MCF 10A (cell line): ENCODE measurements at regions of chr9 and their contacts with region 1.

Region 1: GRCh38 chr9:74952281-74953151 is at the start of gene C9orf40:
- DNase-seq: peak; percentile 82
- H3K4me3 Mint-ChIP-seq: peak within 1 kb of the TSS; percentile 88
- H3K27ac Mint-ChIP-seq: peak within 1 kb of the TSS; percentile 92
- H3K4me1 Mint-ChIP-seq: peaks cover 9% of the 10 kb centered on the region
- H3K27me3 Mint-ChIP-seq: no peaks in the 10 kb centered on the region
- CTCF ChIP-seq: peak; percentile 69
- total RNA-seq, gene C9orf40: 5.6 and 5.8 TPM in 2 replicates

Region 2: GRCh38 chr9:74255489-74255984 is 697.0 kb before region 1 on chr9:
- CTCF ChIA-PET with region 1: interaction called, 11 read pairs
- POLR2A ChIA-PET with region 1: no interaction called
- intact Hi-C with region 1: no loop called
- DNase-seq: no peak
- H3K4me3 Mint-ChIP-seq: no peak overlapping the region
- H3K27ac Mint-ChIP-seq: no peak overlapping the region
- H3K4me1 Mint-ChIP-seq: no peaks in the 10 kb centered on the region
- H3K27me3 Mint-ChIP-seq: no peaks in the 10 kb centered on the region
- CTCF ChIP-seq: no peak

Region 3: GRCh38 chr9:74935008-74935407 is 17.5 kb before region 1 on chr9:
- CTCF ChIA-PET with region 1: interaction called, 16 read pairs
- POLR2A ChIA-PET with region 1: interaction called, 3 read pairs
- intact Hi-C with region 1: no loop called
- DNase-seq: no peak
- H3K4me3 Mint-ChIP-seq: no peak overlapping the region
- H3K27ac Mint-ChIP-seq: no peak overlapping the region
- H3K4me1 Mint-ChIP-seq: no peaks in the 10 kb centered on the region
- H3K27me3 Mint-ChIP-seq: no peaks in the 10 kb centered on the region
- CTCF ChIP-seq: no peak

Region 4: DNA sequence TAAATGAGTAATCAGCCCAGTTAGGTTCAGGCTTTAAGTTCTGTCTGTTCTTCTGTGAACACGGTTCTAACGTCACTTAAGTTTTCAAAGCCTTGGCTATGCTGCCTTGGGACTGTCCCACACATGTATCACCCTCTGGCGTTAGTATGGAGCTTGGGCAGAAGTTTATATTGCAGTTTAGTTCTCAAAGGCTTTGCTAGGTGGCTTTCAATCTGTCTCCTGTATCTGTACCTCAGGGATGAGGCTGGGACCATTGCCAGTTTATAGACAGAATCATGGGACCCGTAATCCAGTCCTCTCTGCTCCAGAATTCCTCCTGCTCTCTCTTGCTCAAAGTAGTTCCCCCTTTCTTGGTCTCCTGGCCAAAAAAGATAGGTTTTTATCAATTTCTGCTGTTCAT is 11.9 kb before region 1 on chr9:
- CTCF ChIA-PET with region 1: interaction called, 33 read pairs
- POLR2A ChIA-PET with region 1: no interaction called
- intact Hi-C with region 1: no loop called
- DNase-seq: peak; percentile 51
- H3K4me3 Mint-ChIP-seq: no peak overlapping the region
- H3K27ac Mint-ChIP-seq: no peak overlapping the region
- H3K4me1 Mint-ChIP-seq: peaks cover 7% of the 10 kb centered on the region
- H3K27me3 Mint-ChIP-seq: no peaks in the 10 kb centered on the region
- CTCF ChIP-seq: no peak

Region 5: DNA sequence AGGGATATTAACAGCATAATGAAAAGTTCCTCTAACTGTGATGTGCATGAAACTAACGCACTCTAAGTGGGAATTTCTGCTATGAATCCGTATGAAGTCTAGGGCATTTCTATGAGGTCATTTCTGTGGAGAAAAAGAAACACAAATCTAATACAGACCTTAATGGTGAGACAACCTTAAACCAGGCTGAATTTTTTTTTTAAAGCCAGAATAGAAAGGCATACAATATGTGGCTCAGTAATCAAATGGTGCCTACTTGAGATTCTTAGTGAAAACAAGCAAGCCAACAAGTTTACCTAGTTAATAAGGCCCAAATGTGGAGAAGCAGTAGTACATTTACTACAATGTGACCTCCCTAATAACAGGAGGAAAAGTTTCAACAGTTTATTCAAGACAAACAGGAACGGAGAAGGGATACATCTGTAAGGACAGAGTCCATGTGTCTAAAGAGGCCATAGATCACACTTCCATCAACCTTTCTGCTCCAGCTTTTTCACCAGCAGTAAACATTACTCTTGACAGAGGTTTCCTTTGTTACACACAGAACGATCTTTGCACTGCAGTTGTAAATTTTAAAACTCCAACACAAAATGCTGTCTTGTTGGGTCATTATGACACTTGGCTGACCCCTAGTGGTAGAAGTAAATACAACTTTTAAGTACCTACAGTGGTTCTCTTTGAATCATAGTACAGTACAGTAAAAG is 49.4 kb after region 1 on chr9:
- CTCF ChIA-PET with region 1: interaction called, 9 read pairs
- POLR2A ChIA-PET with region 1: no interaction called
- intact Hi-C with region 1: loop called (anchors 5 kb)
- DNase-seq: peak; percentile 82
- H3K4me3 Mint-ChIP-seq: no peak overlapping the region
- H3K27ac Mint-ChIP-seq: no peak overlapping the region
- H3K4me1 Mint-ChIP-seq: no peaks in the 10 kb centered on the region
- H3K27me3 Mint-ChIP-seq: no peaks in the 10 kb centered on the region
- CTCF ChIP-seq: peak; percentile 68

Region 6: GRCh38 chr9:75027187-75028107 is 74.9 kb after region 1 on chr9:
- CTCF ChIA-PET with region 1: interaction called, 6 read pairs
- POLR2A ChIA-PET with region 1: interaction called, 16 read pairs
- intact Hi-C with region 1: loop called (anchors 5 kb)
- DNase-seq: peak; percentile 50
- H3K4me3 Mint-ChIP-seq: peak overlapping the region; percentile 95
- H3K27ac Mint-ChIP-seq: peak overlapping the region; percentile 21
- H3K4me1 Mint-ChIP-seq: peaks cover 12% of the 10 kb centered on the region
- H3K27me3 Mint-ChIP-seq: no peaks in the 10 kb centered on the region
- CTCF ChIP-seq: no peak

Region 7: DNA sequence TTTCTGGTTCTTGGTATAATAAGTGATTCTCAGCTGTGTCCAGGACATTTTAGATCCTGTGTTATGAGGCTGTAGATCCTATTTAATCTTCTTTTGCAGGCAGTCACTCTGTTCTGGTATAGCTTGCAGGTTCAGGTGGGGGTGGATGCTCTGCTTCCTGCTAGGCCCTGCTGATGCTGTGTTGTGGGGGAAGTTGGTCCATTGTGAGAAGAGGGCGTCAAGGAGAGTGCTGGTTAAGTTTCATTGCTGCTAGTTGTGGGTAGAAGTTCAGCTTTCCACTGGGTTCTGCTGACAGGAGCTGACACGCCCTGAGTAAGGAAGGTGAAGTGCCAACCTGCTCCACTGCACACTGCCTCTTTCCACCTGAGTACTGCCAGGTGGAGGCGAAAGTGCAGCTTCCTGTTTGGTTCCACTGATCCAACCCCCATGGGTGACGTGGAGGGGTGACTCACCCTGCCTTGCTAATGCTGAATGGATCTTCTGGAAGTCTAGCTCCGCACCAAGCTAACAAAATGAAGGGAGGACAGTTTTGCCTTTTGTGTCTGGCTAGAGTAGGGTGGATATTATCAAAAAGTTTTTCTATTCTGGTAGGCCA is 119.1 kb after region 1 on chr9:
- CTCF ChIA-PET with region 1: interaction called, 5 read pairs
- POLR2A ChIA-PET with region 1: interaction called, 3 read pairs
- intact Hi-C with region 1: loop called (anchors 5 kb)
- DNase-seq: peak; percentile 81
- H3K4me3 Mint-ChIP-seq: no peak overlapping the region
- H3K27ac Mint-ChIP-seq: peak overlapping the region; percentile 77
- H3K4me1 Mint-ChIP-seq: peaks cover 13% of the 10 kb centered on the region
- H3K27me3 Mint-ChIP-seq: no peaks in the 10 kb centered on the region
- CTCF ChIP-seq: no peak

Region 8: DNA sequence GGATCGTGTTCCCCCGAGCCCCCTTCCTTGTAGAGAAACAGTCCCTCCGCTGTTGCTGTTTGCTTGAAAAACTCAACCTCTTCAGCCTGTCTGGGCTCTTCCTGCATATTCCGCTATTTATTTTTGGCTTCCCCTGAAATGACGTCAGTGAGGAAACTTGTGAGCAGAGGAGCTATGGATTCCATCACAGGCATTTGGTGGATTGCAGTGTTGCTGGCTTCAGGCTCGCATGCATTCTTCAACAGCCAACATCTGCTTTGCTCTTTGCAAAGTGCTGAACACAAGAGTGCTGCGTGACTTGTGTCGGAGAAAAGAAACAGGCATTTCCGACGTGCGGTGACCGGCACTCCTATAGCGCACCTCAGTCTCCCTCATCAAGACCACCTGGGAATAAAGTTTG is 1209.0 kb after region 1 on chr9:
- CTCF ChIA-PET with region 1: no interaction called
- POLR2A ChIA-PET with region 1: no interaction called
- intact Hi-C with region 1: no loop called
- DNase-seq: no peak
- H3K4me3 Mint-ChIP-seq: no peak overlapping the region
- H3K27ac Mint-ChIP-seq: no peak overlapping the region
- H3K4me1 Mint-ChIP-seq: no peaks in the 10 kb centered on the region
- H3K27me3 Mint-ChIP-seq: no peaks in the 10 kb centered on the region
- CTCF ChIP-seq: no peak